ENCODE measurements at regions of chr5 and their contacts with region 1.

Region 1: GRCh38 chr5:171405601-171406005 is 13.8 kb upstream of the FGF18 start:
- DNase-seq: no peak
- ATAC-seq: peak; percentile 42
- H3K4me3 Mint-ChIP-seq: no peak overlapping the region
- H3K27ac Mint-ChIP-seq: peak overlapping the region; percentile 47
- H3K4me1 Mint-ChIP-seq: peaks cover 44% of the 10 kb centered on the region
- H3K27me3 Mint-ChIP-seq: no peaks in the 10 kb centered on the region

Region 2: DNA sequence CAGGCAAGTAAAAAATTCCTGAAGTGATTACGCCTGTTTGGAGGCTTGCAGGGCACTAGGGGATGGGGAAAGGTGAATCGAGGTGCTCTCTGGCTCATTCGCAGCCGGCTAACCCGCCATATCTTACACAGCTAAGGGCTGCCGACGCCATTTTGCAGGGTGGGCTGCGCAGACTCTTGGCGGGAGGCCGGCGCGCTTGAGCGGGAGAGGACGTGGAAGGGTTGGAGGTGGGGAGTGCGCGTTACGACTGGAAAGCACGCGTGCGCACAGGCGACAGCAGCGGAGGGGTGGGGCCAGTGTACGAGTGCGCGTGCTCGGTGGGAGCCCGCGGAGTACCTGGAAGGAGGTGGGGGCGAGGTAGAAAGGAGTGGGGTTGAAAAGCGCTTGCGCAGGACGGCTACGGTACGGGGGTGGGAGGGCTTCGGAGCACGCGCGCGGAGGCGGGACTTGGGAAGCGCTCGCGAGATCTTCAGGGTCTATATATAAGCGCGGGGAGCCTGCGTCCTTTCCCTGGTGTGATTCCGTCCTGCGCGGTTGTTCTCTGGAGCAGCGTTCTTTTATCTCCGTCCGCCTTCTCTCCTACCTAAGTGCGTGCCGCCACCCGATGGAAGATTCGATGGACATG is 18.1 kb before region 1 on chr5 and contains the start of gene NPM1:
- CTCF ChIA-PET with region 1: interaction called, 6 read pairs
- POLR2A ChIA-PET with region 1: interaction called, 8 read pairs
- intact Hi-C with region 1: loop called (anchors 2 kb)
- DNase-seq: peak; percentile 99
- ATAC-seq: peak; percentile 83
- H3K4me3 Mint-ChIP-seq: peak within 1 kb of the TSS; percentile 88
- H3K27ac Mint-ChIP-seq: peak within 1 kb of the TSS; percentile 99
- H3K4me1 Mint-ChIP-seq: peaks cover 37% of the 10 kb centered on the region
- H3K27me3 Mint-ChIP-seq: no peaks in the 10 kb centered on the region
- total RNA-seq, gene NPM1: 3,156 to 3,905 TPM

Region 3: DNA sequence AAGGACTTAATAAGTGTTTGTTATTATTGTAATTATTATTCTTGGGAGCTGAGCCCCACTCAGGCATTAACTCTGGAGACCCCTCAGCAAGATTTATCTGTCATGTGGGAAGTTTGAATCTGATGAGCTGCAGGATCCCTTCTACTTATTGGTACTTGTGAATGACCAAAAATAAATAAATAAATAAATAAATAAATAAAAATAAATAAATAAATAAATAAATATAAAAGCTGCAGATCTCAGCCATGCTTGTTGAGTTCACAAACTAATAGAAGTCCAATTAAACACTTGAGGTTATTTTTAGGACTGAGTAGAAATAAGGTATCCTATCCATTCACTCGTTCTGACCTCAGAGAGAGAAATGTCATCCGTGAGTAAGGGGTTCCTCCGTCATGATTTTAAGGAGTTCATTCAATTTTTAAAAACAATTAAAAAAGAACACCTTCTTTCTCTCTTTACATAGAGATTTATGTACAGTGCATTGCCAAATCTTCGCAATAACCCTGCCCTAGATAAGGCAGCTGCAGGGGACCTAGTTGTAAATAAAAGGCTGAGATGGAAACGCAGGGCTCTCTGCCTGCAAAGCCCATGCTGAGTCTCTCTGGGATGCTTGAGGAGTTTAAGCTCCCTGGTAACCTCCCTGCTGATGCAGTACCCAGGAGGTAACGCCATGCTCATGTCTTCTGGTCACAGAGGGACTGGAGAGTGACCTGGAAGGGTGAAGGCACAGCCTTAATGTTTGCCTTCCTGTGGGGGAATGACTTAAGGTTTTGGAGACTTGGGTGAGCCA is 789.6 kb after region 1 on chr5:
- CTCF ChIA-PET with region 1: no interaction called
- POLR2A ChIA-PET with region 1: no interaction called
- intact Hi-C with region 1: no loop called
- DNase-seq: no peak
- ATAC-seq: no peak
- H3K4me3 Mint-ChIP-seq: no peak overlapping the region
- H3K27ac Mint-ChIP-seq: no peak overlapping the region
- H3K4me1 Mint-ChIP-seq: no peaks in the 10 kb centered on the region
- H3K27me3 Mint-ChIP-seq: peaks cover 3% of the 10 kb centered on the region